Aorta (tissue), 5 donors: ENCODE measurements at regions of chr6 and their contacts with region 1.

Region 1: DNA sequence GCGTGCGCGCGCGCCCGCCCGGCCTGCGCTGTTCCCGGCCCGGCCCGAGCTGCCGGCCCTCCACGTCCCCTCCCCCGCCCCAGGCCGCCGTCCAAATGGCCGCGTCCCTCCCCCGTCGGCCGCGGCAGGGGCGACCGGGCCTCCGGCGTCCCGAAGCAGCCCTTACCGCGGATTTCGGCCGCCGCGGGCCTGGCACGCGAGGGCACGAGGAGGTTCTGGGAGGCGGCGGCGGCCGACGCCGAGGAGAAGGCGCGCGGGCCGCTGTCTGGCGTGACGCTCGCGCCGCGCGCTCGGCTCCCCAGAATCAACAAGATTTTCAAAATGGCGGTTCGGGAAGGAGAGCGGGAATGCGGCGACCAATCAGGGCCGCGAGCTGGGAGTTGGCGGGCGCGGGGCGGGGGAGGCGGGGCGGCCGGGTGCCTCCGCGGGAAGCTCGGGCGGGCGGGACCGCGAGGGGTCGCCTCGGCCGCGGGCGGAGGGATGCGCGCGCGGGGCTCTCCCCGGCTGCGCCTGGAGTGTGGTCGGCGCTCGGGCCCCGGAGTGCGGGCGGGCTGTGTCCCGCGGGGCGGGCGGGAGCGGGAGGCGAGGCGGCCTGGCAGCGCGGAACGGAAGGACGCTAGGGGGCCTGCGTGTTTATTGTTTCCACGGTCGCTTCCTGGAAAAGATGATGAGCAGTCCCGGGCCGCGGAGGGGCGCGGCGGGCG is at the start of gene DEK:
- DNase-seq: peak; percentile 90 to 95
- ATAC-seq: peak; percentile 90
- H3K4me3 ChIP-seq: peak within 1 kb of the TSS; percentile 82 to 90
- H3K27ac ChIP-seq: peak within 1 kb of the TSS; percentile 50 to 79
- H3K4me1 ChIP-seq: no peaks in the 10 kb centered on the region
- H3K27me3 ChIP-seq: no peaks in the 10 kb centered on the region
- total RNA-seq, gene DEK: 73.0 to 77.6 TPM

Region 2: DNA sequence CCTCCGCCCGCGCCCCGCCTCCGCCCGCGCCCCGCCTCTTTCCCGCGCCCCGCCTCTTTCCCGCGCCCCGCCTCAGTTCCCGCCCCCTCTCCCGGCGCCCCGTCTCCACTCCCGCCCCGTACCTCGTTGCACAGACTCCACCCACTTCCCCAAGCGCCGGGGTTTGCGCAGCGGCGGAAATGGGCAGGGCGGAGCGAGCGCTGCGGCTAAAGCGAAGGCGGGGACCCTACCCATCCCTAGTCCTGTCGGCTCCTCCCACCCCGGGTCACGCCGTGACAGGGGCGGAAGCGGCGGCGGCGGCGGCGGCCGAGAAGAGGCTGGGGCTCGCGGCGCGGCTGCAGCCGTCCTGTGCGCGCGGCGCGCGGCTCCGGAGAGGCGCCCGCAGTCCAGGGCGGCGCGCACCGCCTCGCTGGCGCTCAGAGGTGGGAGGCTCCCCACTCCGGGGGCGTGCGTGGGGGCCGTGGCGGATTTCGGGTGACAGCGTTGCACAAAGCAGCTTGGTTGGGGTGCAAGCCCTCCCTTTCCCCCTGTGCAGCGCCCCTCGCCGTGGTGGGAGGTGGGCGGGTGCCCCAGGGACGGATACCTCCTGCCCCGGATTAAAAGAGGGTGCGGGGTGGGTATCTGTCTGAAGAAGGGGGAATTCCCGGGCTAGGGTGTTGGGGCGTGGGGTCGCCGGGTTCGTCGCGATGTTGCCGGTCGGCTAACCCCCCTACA is 109.1 kb before region 1 on chr6 and contains the start of gene KDM1B:
- intact Hi-C with region 1: loop called in 1 of 2 experiments (anchors 5 kb)
- DNase-seq: peak; percentile 99
- ATAC-seq: peak; percentile 100
- H3K4me3 ChIP-seq: peak within 1 kb of the TSS; percentile 85 to 91
- H3K27ac ChIP-seq: peak within 1 kb of the TSS in 1 of 2 donors; percentile 34
- H3K4me1 ChIP-seq: no peaks in the 10 kb centered on the region
- H3K27me3 ChIP-seq: no peaks in the 10 kb centered on the region
- total RNA-seq, gene KDM1B: 12.6 to 15.3 TPM

Region 3: GRCh38 chr6:18477301-18477941 is 213.1 kb after region 1 on chr6:
- intact Hi-C with region 1: no loop called
- DNase-seq: no peak
- ATAC-seq: no peak
- H3K4me3 ChIP-seq: no peak overlapping the region
- H3K27ac ChIP-seq: no peak overlapping the region
- H3K4me1 ChIP-seq: no peaks in the 10 kb centered on the region
- H3K27me3 ChIP-seq: no peaks in the 10 kb centered on the region

Region 4: DNA sequence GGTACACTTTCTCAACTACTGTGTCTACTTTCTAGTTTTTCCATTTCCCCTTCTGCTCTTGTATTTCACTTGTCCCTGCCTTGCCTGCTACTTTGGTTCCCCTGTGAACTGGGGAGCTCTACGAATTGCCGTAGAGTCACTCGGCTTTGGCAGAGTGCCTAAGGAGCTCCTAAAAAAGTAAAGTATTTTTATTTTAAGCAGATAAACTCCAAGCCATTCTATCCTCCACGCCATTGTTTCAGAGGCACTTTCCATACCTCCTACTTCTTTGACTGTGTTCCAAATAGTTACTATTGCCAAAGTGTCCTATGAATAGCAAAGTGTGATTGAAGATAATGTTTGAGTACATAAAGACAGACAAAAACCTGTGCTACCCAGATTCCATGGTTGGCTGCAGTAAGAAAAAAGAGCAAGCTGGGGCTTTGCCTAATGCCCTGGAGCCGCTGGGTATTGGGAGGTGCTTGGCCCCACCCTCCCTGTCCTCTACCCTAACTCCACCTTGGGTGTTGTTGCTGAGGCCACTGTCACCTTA is 1953.0 kb after region 1 on chr6:
- intact Hi-C with region 1: loop called in 1 of 2 experiments (anchors 5 kb)
- DNase-seq: no peak
- ATAC-seq: no peak
- H3K4me3 ChIP-seq: no peak overlapping the region
- H3K27ac ChIP-seq: no peak overlapping the region
- H3K4me1 ChIP-seq: no peaks in the 10 kb centered on the region
- H3K27me3 ChIP-seq: no peaks in the 10 kb centered on the region